ENCODE measurements at regions of chr1 and their contacts with region 1.

Region 1: GRCh38 chr1:1291548-1292441 is 11.6 kb downstream of the SCNN1D start:
- DNase-seq: peak; percentile 75 to 79 (median 77)
- ATAC-seq: peak; percentile 58 to 80 (median 78)
- H3K4me3 ChIP-seq: no peak overlapping the region
- H3K27ac ChIP-seq: no peak overlapping the region
- H3K4me1 ChIP-seq: no peaks in the 10 kb centered on the region
- H3K27me3 ChIP-seq: no peaks in the 10 kb centered on the region
- CTCF ChIP-seq: peak; percentile 51 to 65 (median 58)
- POLR2A ChIP-seq: no peak

Region 2: GRCh38 chr1:1246577-1247340 is 45.0 kb before region 1 on chr1 and contains the start of gene C1QTNF12:
- intact Hi-C with region 1: loop called in 1 of 2 experiments (anchors 10 kb)
- DNase-seq: peak in 1 of 3 donors; percentile 48
- ATAC-seq: peak in 2 of 4 donors; percentile 8 to 28
- H3K4me3 ChIP-seq: no peak within 1 kb of the TSS
- H3K27ac ChIP-seq: no peak within 1 kb of the TSS
- H3K4me1 ChIP-seq: no peaks in the 10 kb centered on the region
- H3K27me3 ChIP-seq: no peaks in the 10 kb centered on the region
- CTCF ChIP-seq: no peak
- POLR2A ChIP-seq: no peak
- total RNA-seq, gene C1QTNF12: 0.40 to 4.0 (median 1.1) TPM in 5 of 6 experiments, not detected in the other